WTC11 (cell line): ENCODE measurements at regions of chr16 and their contacts with region 1.

Region 1: GRCh38 chr16:24010440-24011089 is 174.8 kb downstream of the PRKCB start:
- DNase-seq: peak; percentile 81
- ATAC-seq: peak; percentile 87
- H3K4me3 Mint-ChIP-seq: no peak overlapping the region
- H3K27ac Mint-ChIP-seq: no peak overlapping the region
- H3K4me1 Mint-ChIP-seq: 0 out of 2 replicates have a peak, but pooled peaks cover 3% of the 10 kb centered on the region
- H3K27me3 Mint-ChIP-seq: peaks cover 6% of the 10 kb centered on the region; the same call in 1 of the 2 replicates
- CTCF ChIP-seq: peak; percentile 89

Region 2: DNA sequence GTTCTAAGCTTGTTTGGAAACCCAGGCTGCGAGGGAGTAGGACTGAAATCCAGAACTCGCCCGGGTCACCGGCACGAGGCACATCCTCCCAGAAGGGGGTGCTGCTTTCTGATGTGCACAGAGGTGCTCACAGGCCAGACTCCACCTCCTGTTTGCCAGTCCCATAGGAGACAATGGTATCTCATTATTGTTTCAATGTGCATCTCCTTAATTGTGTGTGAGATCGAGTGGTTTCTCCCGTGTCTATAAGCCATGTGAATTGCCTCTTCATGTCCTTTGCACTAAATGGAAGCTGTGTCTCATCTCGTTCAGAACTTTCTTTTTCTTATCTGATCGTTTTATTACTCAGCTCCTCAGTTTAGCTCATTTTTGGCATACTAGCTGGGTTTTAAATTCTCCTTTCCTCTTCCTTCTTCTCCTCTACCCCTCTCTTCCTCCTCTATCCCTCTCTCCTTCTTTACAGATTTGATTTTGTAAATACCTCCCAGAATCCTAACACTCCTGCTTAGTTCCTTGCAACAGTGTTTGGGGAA is 206.9 kb before region 1 on chr16:
- CTCF ChIA-PET with region 1: interaction called, 65 read pairs
- POLR2A ChIA-PET with region 1: no interaction called
- DNase-seq: peak; percentile 75
- ATAC-seq: peak; percentile 97
- H3K4me3 Mint-ChIP-seq: no peak overlapping the region
- H3K27ac Mint-ChIP-seq: no peak overlapping the region
- H3K4me1 Mint-ChIP-seq: peaks cover 4% of the 10 kb centered on the region; the same call in 1 of the 2 replicates
- H3K27me3 Mint-ChIP-seq: no peaks in the 10 kb centered on the region; the same call in 1 of the 2 replicates
- CTCF ChIP-seq: peak; percentile 25; the same call in 1 of the 2 replicates

Region 3: DNA sequence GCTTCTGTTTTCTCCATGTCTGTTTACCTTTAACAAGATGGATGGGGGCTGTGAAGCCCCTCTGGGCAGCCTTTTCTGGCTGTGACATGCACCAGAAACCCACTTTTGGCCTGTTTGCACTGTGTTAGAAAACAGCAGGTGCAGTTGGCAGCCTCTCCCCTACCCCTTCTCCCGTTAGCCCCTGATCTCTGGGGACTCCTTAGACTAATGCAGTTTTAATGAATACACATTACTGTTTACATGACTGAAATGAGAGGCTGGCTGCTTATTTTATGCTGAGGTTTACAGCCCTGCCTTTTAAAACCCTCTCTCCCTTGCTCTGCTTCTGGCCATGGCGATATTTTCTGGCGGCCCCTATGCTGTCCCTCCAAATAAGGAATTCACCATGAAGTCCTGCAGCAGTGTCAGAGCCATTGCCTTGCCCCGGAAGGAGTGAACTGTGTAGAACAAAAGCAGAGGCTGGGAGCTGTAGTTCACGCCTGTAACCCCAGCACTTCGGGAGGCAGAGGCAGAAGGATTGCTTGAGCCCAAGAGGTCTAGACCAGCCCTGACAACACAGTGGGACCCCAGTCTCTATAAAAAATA is 95.5 kb before region 1 on chr16:
- CTCF ChIA-PET with region 1: interaction called, 22 read pairs
- POLR2A ChIA-PET with region 1: no interaction called
- DNase-seq: no peak
- ATAC-seq: peak; percentile 65
- H3K4me3 Mint-ChIP-seq: no peak overlapping the region
- H3K27ac Mint-ChIP-seq: no peak overlapping the region
- H3K4me1 Mint-ChIP-seq: peaks cover 8% of the 10 kb centered on the region
- H3K27me3 Mint-ChIP-seq: no peaks in the 10 kb centered on the region
- CTCF ChIP-seq: no peak

Region 4: DNA sequence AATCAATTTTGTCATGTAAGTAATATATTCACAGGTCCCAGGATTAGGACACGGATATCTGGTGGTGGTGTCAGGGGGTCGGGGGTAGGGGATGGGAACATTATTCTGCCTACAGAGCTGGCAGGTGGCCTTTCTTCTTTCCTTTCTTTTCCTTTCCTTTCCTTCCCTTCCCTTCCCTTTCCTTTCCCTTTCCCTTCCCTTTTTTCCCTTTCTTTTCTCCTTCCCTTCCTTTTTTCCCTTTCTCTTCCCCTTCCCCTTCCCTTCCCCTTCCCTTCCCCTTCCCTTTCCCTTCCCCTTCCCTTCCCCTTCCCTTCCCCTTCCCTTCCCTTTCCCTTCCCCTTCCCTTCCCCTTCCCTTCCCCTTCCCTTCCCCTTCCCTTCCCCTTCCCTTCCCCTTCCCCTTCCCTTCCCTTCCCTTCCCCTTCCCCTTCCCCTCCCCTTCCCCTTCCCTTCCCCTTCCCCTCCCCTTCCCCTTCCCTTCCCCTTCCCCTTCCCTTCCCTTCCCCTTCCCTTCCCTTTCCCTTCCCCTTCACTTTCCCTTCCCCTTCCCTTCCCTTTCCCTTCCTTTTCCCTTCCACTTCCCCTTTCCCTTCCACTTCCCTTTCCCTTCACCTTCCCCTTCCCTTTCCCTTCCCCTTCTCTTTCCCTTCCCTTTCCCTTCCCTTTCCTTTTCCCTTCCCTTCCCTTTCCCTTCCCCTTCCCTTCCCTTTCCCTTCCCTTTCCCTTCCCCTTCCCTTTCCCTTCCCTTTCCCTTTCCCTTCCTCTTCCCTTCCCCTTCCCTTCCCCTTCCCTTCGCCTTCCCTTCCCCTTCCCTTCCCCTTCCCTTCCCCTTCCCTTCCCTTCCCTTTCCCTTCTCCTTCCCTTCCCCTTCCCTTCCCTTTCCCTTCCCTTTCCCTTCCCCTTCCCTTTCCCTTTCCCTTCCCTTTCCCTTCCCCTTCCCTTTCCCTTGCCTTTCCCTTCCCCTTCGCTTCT is 28.9 kb before region 1 on chr16:
- CTCF ChIA-PET with region 1: interaction called, 12 read pairs
- POLR2A ChIA-PET with region 1: no interaction called
- DNase-seq: no peak
- ATAC-seq: no peak
- H3K4me3 Mint-ChIP-seq: no peak overlapping the region
- H3K27ac Mint-ChIP-seq: no peak overlapping the region
- H3K4me1 Mint-ChIP-seq: peaks cover 11% of the 10 kb centered on the region
- H3K27me3 Mint-ChIP-seq: peaks cover 16% of the 10 kb centered on the region
- CTCF ChIP-seq: no peak

Region 5: DNA sequence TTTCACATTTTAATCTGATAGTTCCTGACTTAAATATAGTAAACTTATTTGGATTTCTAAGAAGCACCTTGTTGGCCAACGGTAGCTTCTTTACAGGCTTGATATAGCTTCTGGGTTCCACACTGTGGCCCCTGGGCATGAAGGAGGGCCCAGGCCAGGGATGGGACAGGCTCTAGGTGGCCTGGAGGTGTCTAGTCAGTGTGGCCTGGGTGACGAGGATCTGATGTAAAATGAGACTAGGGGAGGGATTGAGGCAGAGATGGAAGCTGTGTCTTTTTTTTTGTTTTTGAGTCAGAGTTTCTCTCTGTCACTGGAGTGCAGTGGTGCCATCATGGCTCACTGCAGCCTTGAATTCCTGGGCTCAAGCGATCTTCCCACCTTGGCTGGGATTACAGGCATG is 12.2 kb after region 1 on chr16:
- CTCF ChIA-PET with region 1: interaction called, 18 read pairs
- POLR2A ChIA-PET with region 1: no interaction called
- DNase-seq: no peak
- ATAC-seq: no peak
- H3K4me3 Mint-ChIP-seq: no peak overlapping the region
- H3K27ac Mint-ChIP-seq: no peak overlapping the region
- H3K4me1 Mint-ChIP-seq: no peaks in the 10 kb centered on the region
- H3K27me3 Mint-ChIP-seq: peaks cover 2% of the 10 kb centered on the region; the same call in 1 of the 2 replicates
- CTCF ChIP-seq: no peak

Region 6: GRCh38 chr16:24318670-24319069 is 308.1 kb after region 1 on chr16:
- CTCF ChIA-PET with region 1: no interaction called
- POLR2A ChIA-PET with region 1: no interaction called
- DNase-seq: peak; percentile 58
- ATAC-seq: peak; percentile 96
- H3K4me3 Mint-ChIP-seq: no peak overlapping the region
- H3K27ac Mint-ChIP-seq: no peak overlapping the region
- H3K4me1 Mint-ChIP-seq: peaks cover 26% of the 10 kb centered on the region
- H3K27me3 Mint-ChIP-seq: no peaks in the 10 kb centered on the region; the same call in 1 of the 2 replicates
- CTCF ChIP-seq: no peak